Activated naive CD8-positive, alpha-beta T cell treated with anti-CD3 and anti-CD28 coated beads, Interleukin-2, amount 10 ng/mL, durations not matched to agents 7 days and 5 days (primary cell): ENCODE measurements at regions of chr5 and their contacts with region 1.

Region 1: DNA sequence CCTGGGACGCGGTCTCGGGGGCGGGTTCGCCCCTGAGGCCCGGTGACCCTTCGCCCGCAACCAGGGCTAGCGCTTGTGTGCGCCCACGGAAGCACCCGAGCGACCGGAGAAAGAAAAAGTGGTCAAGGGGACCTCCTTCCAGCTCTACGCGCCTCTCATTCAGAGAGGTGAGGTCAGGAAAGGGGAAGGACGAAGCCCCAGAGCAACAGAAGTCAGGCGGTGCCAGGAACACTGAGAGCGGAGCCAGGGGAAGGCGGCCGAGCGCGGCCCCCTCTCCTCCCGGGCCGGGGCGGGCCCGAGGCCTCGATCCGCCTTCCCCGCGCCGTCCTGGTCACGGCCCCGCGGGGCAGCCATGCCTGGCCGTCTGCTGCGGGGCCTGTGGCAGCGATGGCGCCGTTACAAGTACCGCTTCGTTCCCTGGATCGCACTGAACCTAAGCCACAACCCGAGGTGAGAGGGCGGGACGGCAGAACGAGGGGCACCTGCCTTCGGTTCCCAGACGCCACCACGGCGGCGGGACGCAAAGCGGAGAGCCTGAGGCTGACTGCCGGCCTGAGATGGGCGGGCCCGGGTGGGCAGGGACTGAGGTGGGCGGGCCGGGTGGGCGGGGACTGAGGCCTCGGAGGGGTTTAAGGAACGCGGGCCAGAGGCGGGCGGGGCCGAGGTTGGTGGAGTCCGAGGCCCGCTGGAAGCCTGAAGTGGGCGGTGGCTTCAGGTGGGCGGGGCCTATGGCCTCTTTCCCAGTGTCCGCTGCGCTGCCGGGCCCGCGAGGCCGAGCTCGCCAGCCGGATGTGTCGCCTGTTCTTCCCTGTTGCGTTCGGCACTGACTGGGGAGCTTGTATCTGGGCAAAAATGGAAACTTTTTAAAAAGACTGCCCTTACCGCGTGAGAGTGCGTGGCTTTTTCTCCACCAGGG is at the start of gene SETD9:
- DNase-seq: peak; percentile 94
- ATAC-seq: peak; percentile 80
- H3K4me3 Mint-ChIP-seq: peak within 1 kb of the TSS; percentile 96
- H3K27ac Mint-ChIP-seq: peak within 1 kb of the TSS; percentile 88
- H3K4me1 Mint-ChIP-seq: peaks cover 18% of the 10 kb centered on the region
- H3K27me3 Mint-ChIP-seq: peaks cover 9% of the 10 kb centered on the region
- total RNA-seq, gene SETD9: 7.0 to 8.9 TPM

Region 2: GRCh38 chr5:56938858-56939257 is 29.3 kb after region 1 on chr5:
- POLR2A ChIA-PET with region 1: no interaction called
- DNase-seq: no peak
- ATAC-seq: no peak
- H3K4me3 Mint-ChIP-seq: no peak overlapping the region
- H3K27ac Mint-ChIP-seq: no peak overlapping the region
- H3K4me1 Mint-ChIP-seq: peaks cover 3% of the 10 kb centered on the region
- H3K27me3 Mint-ChIP-seq: no peaks in the 10 kb centered on the region

Region 3: DNA sequence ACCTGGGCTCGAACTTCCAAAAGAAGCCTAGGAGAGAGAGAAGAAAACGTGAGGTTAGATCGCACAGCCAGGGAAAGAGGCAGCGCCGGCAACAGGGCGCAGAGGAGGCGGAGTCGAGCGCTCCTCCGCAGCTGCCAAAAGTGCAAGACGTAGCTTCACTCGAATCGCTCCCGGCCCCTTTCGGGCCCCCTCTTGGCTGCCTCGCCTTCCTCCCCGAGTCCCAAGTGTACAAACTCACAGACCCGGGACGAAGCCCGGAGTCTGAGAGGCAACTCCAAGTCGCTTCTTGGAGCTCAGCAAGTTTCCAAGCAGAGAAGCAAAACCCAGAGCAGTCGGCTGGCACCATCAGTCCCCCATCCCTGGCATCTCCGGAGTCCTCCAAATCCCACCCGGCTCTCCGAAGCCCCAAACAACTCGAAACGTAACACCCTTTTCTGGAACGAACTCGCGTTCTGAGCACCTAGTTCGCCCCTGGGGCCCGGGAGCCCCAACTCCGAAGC is 41.1 kb after region 1 on chr5:
- POLR2A ChIA-PET with region 1: interaction called, 13 read pairs
- DNase-seq: peak; percentile 63
- ATAC-seq: peak; percentile 53
- H3K4me3 Mint-ChIP-seq: peak overlapping the region; percentile 89
- H3K27ac Mint-ChIP-seq: peak overlapping the region; percentile 74
- H3K4me1 Mint-ChIP-seq: peaks cover 14% of the 10 kb centered on the region
- H3K27me3 Mint-ChIP-seq: peaks cover 28% of the 10 kb centered on the region

Region 4: DNA sequence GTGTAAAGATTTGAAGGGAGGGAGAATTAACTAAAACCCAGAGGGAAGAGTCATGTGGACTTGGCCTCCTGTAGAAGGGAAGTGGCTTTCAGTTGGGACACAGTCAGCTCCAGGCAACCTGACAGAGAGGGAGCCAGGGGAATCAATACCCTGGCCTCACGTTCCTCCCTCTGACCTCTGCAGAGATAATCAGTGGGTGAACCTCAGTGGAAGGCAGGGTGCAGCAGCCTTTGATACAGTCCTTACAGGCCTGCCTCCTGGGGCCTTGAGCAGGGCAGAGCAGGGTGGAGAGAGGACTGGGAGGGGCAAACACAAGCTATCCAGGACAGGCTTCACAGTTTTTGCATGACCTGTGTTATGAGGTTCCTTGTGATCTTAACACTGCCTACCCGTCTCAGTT is 202.4 kb after region 1 on chr5:
- POLR2A ChIA-PET with region 1: no interaction called
- DNase-seq: no peak
- ATAC-seq: no peak
- H3K4me3 Mint-ChIP-seq: no peak overlapping the region
- H3K27ac Mint-ChIP-seq: no peak overlapping the region
- H3K4me1 Mint-ChIP-seq: peaks cover 14% of the 10 kb centered on the region
- H3K27me3 Mint-ChIP-seq: peaks cover 5% of the 10 kb centered on the region

Region 5: DNA sequence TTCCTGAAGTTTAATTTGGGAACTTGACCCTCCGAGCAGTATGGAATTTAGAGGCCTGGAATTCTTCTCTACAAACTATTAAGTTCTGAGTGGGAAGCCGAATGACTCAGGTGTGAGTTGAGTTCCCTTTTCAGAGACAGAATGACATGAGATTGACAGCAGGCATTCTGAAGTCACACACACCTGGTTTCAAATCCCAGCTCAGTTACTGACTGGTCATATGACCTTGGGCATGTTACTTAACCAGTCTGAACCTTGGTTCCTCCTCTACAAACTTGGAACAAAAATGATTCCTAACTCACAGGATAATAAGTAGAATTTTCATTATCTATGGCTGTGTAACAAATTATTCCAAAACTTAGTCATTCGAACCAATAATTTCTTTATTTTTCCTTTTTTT is 218.8 kb after region 1 on chr5:
- POLR2A ChIA-PET with region 1: no interaction called
- DNase-seq: no peak
- ATAC-seq: no peak
- H3K4me3 Mint-ChIP-seq: no peak overlapping the region
- H3K27ac Mint-ChIP-seq: no peak overlapping the region
- H3K4me1 Mint-ChIP-seq: no peaks in the 10 kb centered on the region
- H3K27me3 Mint-ChIP-seq: no peaks in the 10 kb centered on the region

Region 6: DNA sequence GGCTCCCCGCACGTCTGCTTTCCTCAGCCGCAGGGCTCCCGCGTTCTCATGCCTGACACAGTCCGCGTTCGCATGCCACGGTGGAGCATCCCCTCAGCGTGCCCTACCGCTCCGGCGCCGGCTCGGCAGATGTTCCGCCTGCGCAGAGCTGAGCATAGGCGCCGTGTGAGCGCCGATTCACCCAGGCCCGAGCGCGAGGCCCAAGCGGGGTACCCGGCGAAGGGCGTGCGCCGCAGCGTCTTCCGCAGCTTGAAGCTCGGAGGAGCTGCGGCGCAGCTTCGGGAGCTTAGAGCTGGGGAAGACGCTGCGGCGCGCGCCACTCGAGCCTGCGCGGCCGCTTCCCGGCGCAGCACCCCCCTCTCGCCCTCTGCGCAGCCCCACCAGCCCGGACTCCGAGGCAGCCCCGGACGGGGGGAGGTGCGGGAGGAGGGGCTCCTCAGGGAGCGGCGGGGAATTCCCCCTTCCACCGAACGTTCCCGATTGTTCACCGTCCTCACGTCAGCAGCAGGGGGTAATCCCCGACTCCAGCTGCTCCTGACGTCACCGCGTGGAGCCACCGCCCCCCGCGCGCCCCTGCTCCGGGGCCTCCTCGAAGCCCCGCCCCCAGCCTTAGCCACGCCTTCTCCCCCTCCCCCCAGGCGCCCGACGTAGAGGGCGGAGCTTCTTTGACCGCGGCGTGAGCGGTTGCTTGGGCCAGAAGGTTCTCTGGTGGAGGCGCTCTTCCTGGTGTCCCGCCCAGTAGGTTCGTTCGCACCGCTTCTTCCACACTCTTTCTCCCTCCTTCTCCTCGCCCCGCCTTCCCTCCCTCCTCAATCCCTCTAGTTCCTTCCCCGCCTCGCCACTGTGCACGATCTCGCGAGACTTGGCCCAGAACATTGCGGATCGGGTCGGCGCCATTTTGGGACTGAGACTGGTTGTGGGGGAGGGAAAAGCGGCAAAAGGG is 263.9 kb after region 1 on chr5 and contains the start of gene GPBP1:
- POLR2A ChIA-PET with region 1: interaction called, 15 read pairs
- DNase-seq: peak; percentile 96
- ATAC-seq: peak; percentile 78
- H3K4me3 Mint-ChIP-seq: peak within 1 kb of the TSS; percentile 98
- H3K27ac Mint-ChIP-seq: peak within 1 kb of the TSS; percentile 99
- H3K4me1 Mint-ChIP-seq: peaks cover 22% of the 10 kb centered on the region
- H3K27me3 Mint-ChIP-seq: no peaks in the 10 kb centered on the region
- total RNA-seq, gene GPBP1: 107 to 112 TPM